ENCODE measurements at regions of chr19 and their contacts with region 1.

Region 1: DNA sequence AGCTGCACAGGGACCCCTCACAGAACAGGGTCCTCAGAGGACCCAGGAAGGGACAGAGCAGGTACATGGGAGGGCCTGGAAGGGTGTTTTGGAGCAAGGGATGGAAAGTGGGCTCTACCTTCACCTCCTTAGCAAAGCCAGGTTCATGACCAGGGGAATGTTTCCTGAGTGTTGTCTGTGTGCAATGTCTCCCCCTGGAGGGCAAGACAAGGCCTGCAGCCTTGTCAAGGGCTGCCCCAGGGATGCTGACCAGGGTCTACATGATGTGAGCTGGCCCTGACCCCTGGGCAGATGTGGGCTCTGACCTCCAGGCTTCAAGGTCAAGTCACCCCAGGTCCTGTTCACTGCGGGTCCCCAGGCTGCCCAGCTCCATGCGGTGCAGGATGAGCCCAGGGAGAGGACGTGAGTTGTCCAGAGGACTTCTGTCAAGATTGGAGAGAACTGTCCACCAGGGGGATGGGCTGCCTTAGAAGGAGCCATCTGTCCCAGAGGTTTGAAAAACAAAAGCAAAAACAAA is 1.0 kb upstream of the CEACAM1 start:
- DNase-seq: no peak
- H3K4me3 ChIP-seq: no peak overlapping the region
- H3K27me3 ChIP-seq: peaks cover 6% of the 10 kb centered on the region; the same call in 1 of the 2 replicates
- CTCF ChIP-seq: peak; percentile 93

Region 2: DNA sequence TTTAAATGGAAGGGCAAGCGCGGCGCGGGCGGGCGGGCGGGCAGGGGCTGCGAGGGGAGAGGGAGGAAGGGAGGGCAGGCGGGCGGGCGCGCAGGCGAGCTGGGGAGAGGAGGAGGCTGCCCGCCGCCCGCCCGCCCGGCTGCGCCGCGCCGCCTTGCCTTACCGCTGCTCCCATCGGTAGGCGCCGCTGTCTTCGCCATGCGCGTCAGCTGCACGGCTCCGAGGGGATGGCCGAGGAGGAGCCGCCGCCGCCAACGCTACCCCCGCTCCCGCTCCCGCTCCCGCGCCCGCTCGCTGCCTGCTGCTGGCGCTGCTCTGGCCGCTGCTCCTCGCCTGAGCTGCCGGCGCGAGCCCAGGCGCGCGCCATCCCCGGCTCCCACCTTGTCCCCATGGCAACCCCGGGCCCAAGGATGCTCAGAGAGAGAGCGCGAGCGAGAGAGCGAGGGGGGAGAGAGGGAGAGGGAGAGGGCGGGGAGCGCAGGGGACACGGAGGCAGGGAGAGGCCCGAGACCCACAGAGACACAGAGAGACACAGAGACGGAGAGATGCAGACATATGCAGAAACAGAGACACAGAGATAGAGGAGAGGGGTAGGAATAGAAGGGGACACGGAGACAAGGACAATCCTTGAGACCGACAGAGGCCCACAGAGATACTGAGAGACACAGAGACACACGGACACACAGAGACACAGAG is 352.2 kb before region 1 on chr19:
- CTCF ChIA-PET with region 1: no interaction called
- POLR2A ChIA-PET with region 1: no interaction called
- DNase-seq: no peak
- H3K4me3 ChIP-seq: peak overlapping the region; percentile 42
- H3K27me3 ChIP-seq: peaks cover 44% of the 10 kb centered on the region
- CTCF ChIP-seq: peak; percentile 37

Region 3: DNA sequence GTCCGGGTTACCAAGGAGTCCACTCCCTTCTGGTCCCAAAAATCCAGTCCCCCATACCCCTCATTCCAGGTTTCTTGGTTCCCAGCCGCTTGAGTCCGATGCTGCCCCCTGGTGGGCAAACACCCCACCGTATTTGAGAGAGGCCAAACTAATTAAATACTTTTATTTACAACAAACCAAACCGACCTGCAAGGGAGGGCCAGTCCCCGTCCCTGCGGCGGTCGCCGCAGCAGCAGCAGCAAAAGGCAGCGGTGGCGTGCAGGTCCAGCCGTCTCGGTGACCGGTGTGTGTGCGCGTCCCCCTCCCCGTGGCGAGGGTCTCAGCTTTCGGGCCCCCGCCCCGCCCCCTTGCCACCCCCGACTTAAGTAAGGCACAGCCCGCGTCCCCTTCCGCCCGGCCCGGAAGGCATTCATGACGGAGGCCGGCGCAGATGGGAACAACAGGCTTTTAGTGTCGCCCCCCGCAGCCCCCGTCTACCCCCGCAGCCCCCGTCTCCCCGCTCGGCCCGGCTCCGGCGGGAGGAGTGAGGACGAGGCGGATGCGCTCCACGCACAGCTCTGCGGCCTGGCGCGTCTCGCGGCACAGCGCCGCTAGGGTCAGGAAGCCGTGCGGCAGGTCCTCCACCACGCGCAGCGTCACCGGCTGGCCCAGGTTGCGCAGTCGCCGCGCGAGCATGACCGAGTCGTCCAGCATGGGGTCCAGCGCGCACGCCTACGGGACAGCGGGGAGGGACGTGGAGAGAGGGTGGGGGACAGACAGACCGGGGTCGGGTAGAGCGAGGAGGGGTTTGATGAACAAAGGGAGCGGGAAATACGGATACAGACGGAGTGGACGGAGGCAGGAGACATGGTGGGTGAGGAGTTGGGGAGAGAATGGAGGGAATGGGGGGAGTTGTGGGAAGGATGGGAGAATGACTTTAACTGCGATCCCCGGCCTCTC is 127.7 kb before region 1 on chr19:
- CTCF ChIA-PET with region 1: no interaction called
- POLR2A ChIA-PET with region 1: no interaction called
- DNase-seq: no peak
- H3K4me3 ChIP-seq: peak overlapping the region; percentile 45
- H3K27me3 ChIP-seq: no peaks in the 10 kb centered on the region
- CTCF ChIP-seq: peak; percentile 89

Region 4: GRCh38 chr19:42450314-42450934 is 78.9 kb before region 1 on chr19:
- CTCF ChIA-PET with region 1: interaction called, 137 read pairs
- POLR2A ChIA-PET with region 1: no interaction called
- DNase-seq: no peak
- H3K4me3 ChIP-seq: no peak overlapping the region
- H3K27me3 ChIP-seq: peaks cover 8% of the 10 kb centered on the region
- CTCF ChIP-seq: peak; percentile 82

Region 5: GRCh38 chr19:42455621-42456081 is 73.7 kb before region 1 on chr19:
- CTCF ChIA-PET with region 1: interaction called, 137 read pairs
- POLR2A ChIA-PET with region 1: no interaction called
- DNase-seq: no peak
- H3K4me3 ChIP-seq: no peak overlapping the region
- H3K27me3 ChIP-seq: peaks cover 6% of the 10 kb centered on the region
- CTCF ChIP-seq: no peak

Region 6: DNA sequence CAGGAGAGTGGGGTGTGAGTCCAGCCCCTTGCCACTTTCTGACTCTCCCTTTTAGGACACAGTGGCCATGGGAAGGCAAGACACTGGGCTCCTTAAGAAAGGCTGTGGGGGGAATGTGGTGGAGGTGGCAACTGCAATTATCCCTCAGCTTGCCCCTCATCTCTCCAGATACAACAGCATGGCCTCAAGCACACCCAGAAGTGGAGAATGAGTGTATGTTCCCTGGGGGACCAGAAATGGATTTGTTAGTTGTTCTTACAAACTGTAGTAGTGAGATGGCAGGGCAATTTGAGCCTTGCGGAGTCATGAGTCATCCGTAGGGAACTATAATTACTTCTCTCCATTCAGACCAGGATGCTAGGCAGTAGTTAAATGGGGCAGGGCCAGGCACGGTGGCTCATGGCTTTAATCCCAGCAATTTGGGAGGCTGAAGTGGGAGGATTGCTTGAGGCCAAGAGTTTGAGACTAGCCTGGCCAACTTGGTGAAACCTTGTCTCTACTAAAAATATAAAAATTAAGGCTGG is 61.0 kb before region 1 on chr19:
- CTCF ChIA-PET with region 1: interaction called, 17 read pairs
- POLR2A ChIA-PET with region 1: no interaction called
- DNase-seq: peak; percentile 46
- H3K4me3 ChIP-seq: no peak overlapping the region
- H3K27me3 ChIP-seq: no peaks in the 10 kb centered on the region; the same call in 1 of the 2 replicates
- CTCF ChIP-seq: no peak

Region 7: DNA sequence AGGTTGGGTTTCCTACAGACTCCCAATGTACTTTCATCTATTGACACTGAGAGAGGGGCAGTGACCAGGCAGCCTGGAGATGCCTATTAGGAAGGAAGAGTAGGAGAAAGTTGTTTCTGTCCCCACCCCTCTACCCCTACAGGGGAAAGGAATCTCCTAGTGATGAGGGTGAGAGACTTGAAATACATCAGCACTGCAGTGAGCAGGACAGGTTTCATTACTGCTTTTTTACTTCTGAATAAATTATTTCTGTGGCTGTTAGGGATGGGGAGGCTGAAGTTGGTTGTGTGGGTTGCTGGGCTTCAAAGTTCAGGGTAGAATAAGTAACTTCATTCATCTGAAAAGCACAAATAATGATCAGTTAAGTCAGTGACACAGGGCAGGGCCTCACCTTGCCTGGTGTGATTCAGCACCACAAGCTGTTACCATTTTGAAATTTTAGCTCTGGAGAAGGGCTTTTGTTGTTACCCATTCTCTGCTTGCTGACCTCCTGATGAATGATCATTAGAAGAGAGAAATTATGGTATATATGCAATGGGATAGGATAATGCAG is 20.3 kb before region 1 on chr19:
- CTCF ChIA-PET with region 1: interaction called, 12 read pairs
- POLR2A ChIA-PET with region 1: no interaction called
- DNase-seq: no peak
- H3K4me3 ChIP-seq: no peak overlapping the region
- H3K27me3 ChIP-seq: peaks cover 11% of the 10 kb centered on the region
- CTCF ChIP-seq: no peak

Measured in BJ (cell line).